ENCODE measurements at regions of chr6 and their contacts with region 1.

Region 1: DNA sequence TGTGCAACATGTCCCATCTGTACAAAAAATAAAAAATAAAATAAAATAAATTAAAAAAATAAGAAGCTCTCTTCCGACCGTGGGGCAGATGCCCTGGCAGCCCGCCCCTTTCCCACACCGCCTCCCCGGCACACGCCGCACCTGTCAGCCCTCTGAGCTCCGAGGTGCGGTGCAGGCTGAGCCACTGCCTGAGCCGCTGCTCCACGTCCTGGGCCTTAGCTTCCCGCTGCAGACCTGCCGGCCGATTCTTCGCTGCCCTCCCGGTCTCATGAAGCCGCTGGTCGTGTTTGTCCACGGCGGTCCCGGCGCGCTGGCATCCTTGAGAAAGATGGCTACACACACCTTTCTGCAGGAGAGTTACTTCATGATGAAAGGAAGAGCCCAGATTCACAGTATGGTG is 10.7 kb upstream of the CLPSL2 start:
- DNase-seq: no peak
- ATAC-seq: no peak
- H3K4me3 Mint-ChIP-seq: no peak overlapping the region
- H3K27ac Mint-ChIP-seq: no peak overlapping the region
- H3K4me1 Mint-ChIP-seq: peaks cover 6% of the 10 kb centered on the region
- H3K27me3 Mint-ChIP-seq: peaks cover 28% of the 10 kb centered on the region

Region 2: DNA sequence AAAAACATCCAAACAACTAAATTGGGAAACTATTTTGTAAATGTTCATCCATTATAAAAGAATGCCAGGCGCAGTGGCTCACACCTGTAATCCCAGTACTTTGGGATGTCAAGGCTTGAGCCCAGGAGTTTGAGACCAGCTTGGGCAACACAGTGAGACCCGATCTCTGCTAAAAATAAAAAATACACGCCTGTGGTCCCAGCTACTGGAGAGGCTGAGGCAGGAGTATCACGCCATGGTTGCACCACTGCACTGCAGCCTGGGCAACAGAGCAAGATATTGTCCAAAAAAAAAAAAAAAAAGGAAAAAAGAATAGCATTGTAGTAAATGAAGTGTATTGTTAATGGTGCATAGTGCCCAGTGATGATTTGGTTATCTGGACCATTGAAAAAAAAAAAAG is 115.7 kb before region 1 on chr6:
- CTCF ChIA-PET with region 1: no interaction called
- POLR2A ChIA-PET with region 1: no interaction called
- intact Hi-C with region 1: no loop called
- DNase-seq: no peak
- ATAC-seq: no peak
- H3K4me3 Mint-ChIP-seq: no peak overlapping the region
- H3K27ac Mint-ChIP-seq: no peak overlapping the region
- H3K4me1 Mint-ChIP-seq: peaks cover 52% of the 10 kb centered on the region
- H3K27me3 Mint-ChIP-seq: no peaks in the 10 kb centered on the region

Region 3: DNA sequence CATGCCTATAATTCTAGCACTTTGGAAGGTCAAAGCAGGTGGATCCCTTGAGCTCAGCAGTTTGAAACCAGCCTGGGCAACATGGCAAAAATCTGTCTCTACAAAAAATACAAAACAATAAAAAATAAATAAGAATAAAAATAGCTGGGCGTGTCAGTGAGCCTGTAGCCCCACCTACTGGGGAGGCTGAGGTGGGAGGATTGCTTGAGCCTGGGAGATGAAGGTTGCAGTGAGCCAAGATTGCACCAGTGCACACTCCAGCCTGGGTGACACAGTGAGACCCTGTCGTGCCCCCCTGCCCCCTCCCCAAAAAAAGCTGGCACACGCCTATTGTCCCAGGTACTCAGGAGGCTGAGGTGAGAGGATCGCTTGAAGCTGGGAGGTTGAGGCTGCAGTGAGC is 190.2 kb after region 1 on chr6:
- CTCF ChIA-PET with region 1: interaction called, 3 read pairs
- POLR2A ChIA-PET with region 1: no interaction called
- intact Hi-C with region 1: loop called in 1 of 2 experiments (anchors 10 kb)
- DNase-seq: peak; percentile 56
- ATAC-seq: no peak
- H3K4me3 Mint-ChIP-seq: no peak overlapping the region
- H3K27ac Mint-ChIP-seq: no peak overlapping the region
- H3K4me1 Mint-ChIP-seq: peaks cover 14% of the 10 kb centered on the region
- H3K27me3 Mint-ChIP-seq: peaks cover 5% of the 10 kb centered on the region